Astrocyte of the cerebellum (primary cell): ENCODE measurements at regions of chr15 and their contacts with region 1.

Region 1: DNA sequence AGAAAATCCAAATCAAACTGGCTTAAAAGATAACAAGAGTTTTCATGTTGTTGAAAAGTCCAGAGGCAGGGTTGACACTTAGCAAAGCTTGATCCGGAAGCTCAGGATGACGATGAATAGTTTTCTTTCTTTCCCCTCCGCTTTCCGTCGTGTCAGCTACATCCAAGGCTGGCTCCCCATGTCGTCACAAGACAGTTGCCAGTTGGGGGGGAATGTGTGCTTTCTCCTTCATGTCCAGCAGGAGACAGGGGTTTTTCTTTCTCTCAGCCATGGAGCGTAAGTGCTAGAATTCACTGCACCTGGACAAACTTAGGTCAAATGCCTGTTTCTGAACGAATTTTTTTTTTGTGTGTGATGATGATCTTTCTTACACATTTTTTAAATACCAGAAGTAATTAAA is 273.8 kb upstream of the RGMA start:
- DNase-seq: no peak
- H3K4me3 ChIP-seq: no peak overlapping the region
- CTCF ChIP-seq: no peak

Region 2: GRCh38 chr15:93048759-93049161 is 314.1 kb before region 1 on chr15:
- in situ Hi-C with region 1: no loop called
- DNase-seq: peak; percentile 51
- H3K4me3 ChIP-seq: no peak overlapping the region
- CTCF ChIP-seq: no peak

Region 3: GRCh38 chr15:93265111-93265556 is 97.7 kb before region 1 on chr15:
- in situ Hi-C with region 1: loop called (anchors 5 kb)
- DNase-seq: no peak
- H3K4me3 ChIP-seq: no peak overlapping the region
- CTCF ChIP-seq: no peak

Region 4: GRCh38 chr15:93278006-93278405 is 84.8 kb before region 1 on chr15:
- in situ Hi-C with region 1: no loop called
- DNase-seq: no peak
- H3K4me3 ChIP-seq: no peak overlapping the region
- CTCF ChIP-seq: no peak

Region 5: GRCh38 chr15:93428807-93429351 is 66.1 kb after region 1 on chr15:
- in situ Hi-C with region 1: no loop called
- DNase-seq: no peak
- H3K4me3 ChIP-seq: no peak overlapping the region
- CTCF ChIP-seq: no peak